ENCODE measurements at regions of chr4 and their contacts with region 1.

Region 1: DNA sequence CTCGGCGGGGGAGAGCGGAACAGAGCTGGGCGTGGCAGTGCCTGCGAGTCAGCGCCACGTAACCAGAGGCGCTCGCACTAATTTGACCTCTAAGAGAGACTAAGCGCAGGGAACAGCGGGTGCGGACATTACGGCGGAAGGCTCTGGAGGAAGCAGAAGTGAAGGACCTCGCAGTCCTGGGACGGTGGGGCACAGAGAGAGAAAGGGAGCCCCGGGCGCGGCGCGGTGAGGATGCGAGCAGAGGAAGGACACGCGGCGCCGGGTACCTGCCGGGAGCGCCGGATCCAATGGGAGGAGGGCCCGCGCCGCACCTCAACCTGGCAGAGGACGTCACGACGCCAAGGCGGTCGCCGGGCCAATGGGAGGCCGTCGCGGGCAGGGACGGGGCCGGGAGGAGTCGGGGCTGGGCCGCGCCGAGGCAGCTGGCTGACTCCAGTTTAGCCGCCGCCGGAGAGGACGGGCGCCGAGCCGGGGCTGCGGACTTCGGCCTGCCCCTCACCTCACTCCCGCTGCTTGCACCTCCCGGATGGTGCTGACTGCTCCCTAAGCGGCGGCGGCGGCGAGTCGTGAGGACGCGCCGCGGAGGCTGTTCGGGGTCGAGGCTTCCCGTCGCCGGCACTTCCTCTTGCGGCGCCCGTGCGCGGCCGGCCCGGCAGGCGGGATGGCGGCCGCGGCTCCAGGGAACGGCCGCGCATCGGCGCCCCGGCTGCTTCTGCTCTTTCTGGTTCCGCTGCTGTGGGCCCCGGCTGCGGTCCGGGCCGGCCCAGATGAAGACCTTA is at the start of gene TMEM165:
- DNase-seq: peak; percentile 97
- H3K4me3 Mint-ChIP-seq: peak within 1 kb of the TSS; percentile 100
- H3K27ac Mint-ChIP-seq: peak within 1 kb of the TSS; percentile 97
- H3K4me1 Mint-ChIP-seq: peaks cover 33% of the 10 kb centered on the region
- H3K27me3 Mint-ChIP-seq: no peaks in the 10 kb centered on the region
- total RNA-seq, gene TMEM165: 87.2 and 99.1 TPM in 2 replicates

Region 2: DNA sequence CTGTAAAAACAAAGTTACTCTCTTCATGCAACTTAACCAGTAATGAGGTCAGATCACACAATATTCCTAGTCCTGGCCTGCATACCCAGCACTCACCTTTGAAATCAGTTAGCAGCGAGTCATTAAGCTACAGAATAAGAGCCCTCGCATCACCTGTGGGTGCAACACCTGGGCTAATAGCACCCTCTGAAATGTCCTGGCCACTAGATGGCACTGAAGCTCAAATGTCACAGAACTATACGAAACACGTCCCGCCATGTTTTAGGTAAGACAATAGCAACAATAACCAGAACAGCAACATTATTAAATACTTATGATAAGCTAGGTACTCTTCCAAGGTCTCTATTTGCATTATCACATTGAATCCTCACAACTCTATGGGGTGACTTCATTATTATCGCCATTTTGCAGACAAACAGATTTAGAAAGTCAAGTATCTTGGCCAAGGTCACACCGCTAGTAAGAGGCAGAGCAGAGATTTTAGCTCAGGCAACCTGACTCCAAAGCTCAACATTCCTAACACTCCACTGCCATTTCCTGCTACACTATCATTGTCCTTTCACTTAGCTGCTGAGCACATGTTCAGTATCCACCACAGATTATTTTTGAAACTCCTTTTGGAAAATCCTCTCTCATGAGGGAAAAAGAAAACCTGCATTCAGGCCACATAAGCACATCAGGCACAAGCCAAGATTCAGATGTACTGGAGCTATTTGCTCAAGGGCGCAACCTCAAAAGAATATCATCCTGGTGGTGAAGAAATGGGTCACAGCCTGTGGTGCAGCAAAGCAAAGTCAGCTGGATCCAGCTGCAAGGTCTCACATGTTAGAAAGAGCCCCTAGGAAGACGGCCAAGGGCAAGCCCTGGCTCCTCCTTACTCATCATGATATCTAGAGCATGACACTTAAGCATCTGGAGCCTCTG is 210.9 kb before region 1 on chr4:
- intact Hi-C with region 1: no loop called
- DNase-seq: peak; percentile 65
- H3K4me3 Mint-ChIP-seq: no peak overlapping the region
- H3K27ac Mint-ChIP-seq: no peak overlapping the region
- H3K4me1 Mint-ChIP-seq: no peaks in the 10 kb centered on the region
- H3K27me3 Mint-ChIP-seq: peaks cover 4% of the 10 kb centered on the region

Region 3: DNA sequence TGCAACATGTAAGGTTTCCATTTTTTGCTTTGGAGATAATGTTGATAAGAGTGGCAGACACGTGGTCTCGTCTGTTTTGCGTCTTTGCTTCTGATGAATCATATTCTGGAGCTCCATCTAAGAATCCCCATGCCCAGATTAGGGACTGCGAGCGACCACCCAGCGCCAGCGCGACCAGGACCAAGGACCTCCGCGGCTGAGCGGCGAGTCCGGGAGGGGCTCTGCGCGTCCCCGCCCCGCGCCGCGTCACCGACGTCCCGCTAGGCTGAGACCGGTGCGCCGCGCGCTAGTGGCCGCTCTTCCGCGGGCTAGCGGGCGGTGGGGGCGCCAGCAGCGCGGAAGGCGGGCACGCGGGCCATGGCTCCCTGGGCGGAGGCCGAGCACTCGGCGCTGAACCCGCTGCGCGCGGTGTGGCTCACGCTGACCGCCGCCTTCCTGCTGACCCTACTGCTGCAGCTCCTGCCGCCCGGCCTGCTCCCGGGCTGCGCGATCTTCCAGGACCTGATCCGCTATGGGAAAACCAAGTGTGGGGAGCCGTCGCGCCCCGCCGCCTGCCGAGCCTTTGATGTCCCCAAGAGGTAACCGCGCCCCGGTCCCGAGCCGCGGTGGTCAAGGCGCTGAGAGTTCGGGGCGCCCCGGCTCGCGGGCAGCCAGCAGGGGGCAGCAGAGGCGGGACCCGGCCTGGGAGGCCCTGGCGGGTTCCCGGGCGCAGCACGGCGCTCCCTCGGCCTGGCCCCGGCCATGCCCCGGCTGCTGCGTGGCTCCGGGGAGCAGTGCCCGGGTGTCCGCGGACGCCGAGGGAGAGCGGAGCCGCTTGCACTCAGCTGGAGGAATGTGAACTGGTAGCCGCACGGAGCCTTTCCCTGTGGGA is 49.5 kb before region 1 on chr4 and contains the start of gene SRD5A3:
- intact Hi-C with region 1: loop called (anchors 1 kb)
- DNase-seq: peak; percentile 95
- H3K4me3 Mint-ChIP-seq: peak within 1 kb of the TSS; percentile 92
- H3K27ac Mint-ChIP-seq: peak within 1 kb of the TSS; percentile 95
- H3K4me1 Mint-ChIP-seq: peaks cover 23% of the 10 kb centered on the region
- H3K27me3 Mint-ChIP-seq: no peaks in the 10 kb centered on the region
- total RNA-seq, gene SRD5A3: 26.6 and 27.4 TPM in 2 replicates

Region 4: GRCh38 chr4:55411621-55412020 is 15.9 kb after region 1 on chr4:
- intact Hi-C with region 1: loop called (anchors 2 kb)
- DNase-seq: no peak
- H3K4me3 Mint-ChIP-seq: no peak overlapping the region
- H3K27ac Mint-ChIP-seq: no peak overlapping the region
- H3K4me1 Mint-ChIP-seq: peaks cover 18% of the 10 kb centered on the region
- H3K27me3 Mint-ChIP-seq: no peaks in the 10 kb centered on the region

Region 5: DNA sequence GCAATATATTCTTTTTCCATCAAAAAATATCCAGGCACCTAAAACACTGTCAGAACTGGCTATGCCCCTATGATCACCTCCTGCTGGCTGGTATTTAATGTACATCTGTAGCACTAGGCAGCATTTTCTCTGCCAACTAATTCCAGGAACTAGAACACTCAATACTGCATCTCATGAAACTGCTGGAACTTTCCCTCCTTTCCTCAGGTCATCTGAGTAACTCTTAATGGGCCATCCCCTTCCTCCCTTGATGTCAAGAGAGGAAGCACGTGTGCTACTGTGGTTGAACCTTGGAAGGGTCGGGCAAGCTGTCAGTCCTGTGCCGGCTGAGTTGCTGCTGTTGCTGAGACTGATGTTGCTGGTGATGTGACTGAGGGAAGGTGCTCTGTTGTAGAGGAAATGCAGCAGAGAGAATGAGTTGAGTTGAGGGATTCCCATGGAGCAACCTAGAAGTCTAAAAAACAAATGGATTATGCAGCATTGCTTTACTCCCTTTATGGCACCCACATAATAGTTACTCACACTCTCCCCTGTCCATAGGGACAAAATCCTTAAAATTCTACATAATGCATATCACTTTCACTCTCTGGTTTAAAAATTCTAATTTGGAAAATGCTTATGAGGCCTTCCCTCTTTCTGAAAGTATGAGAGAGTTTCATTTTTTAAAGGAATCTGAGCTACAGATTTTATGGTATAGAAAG is 39.6 kb after region 1 on chr4:
- intact Hi-C with region 1: loop called (anchors 2 kb)
- DNase-seq: peak; percentile 71
- H3K4me3 Mint-ChIP-seq: no peak overlapping the region
- H3K27ac Mint-ChIP-seq: peak overlapping the region; percentile 77
- H3K4me1 Mint-ChIP-seq: peaks cover 15% of the 10 kb centered on the region
- H3K27me3 Mint-ChIP-seq: no peaks in the 10 kb centered on the region

Measured in activated CD4-positive, alpha-beta T cell treated with anti-CD3 and anti-CD28 coated beads, Interleukin-2, amount 10 ng/mL, durations not matched to agents 24 days and 14 days (primary cell).